GM12878 (cell line): ENCODE measurements at regions of chr1 and their contacts with region 1.

Region 1: GRCh38 chr1:169601093-169601881 is 15.0 kb upstream of the F5 start:
- DNase-seq: peak; percentile 52
- ATAC-seq: peak; percentile 81
- H3K4me3 ChIP-seq: no peak overlapping the region
- H3K27ac ChIP-seq: no peak overlapping the region
- H3K4me1 ChIP-seq: peaks cover 10% of the 10 kb centered on the region
- H3K27me3 ChIP-seq: no peaks in the 10 kb centered on the region
- CTCF ChIP-seq: peak; percentile 42 to 73 (median 53); a peak in 5 of 6 replicates
- EP300 ChIP-seq: no peak
- POLR2A ChIP-seq: no peak
- RAD21 ChIP-seq: peak; percentile 87

Region 2: DNA sequence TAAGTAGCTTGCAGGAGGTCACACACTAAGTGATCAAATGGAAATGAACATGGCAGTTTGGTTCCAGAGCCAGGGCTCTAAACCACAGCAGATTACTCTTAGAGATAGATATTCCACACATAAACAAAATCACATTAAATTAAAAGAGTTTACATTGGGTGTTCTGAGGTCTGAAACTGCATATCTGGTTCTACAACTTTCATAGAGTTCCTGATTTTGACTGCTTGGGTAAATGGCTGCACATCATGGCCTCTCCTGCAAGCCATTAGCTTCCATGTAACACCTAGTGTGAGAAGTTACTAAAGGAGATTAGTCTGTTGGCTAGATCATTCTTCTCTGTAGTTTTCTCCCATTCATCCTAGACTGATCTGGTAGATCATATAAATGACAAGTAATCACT is 1044.6 kb before region 1 on chr1:
- CTCF ChIA-PET with region 1: no interaction called
- POLR2A ChIA-PET with region 1: no interaction called
- RAD21 ChIA-PET with region 1: no interaction called
- SMC1A ChIA-PET with region 1: no interaction called
- in situ Hi-C with region 1: no loop called
- intact Hi-C with region 1: no loop called
- DNase-seq: no peak
- ATAC-seq: no peak
- H3K4me3 ChIP-seq: no peak overlapping the region
- H3K27ac ChIP-seq: no peak overlapping the region
- H3K4me1 ChIP-seq: no peaks in the 10 kb centered on the region; the same call in 1 of the 2 replicates
- H3K27me3 ChIP-seq: no peaks in the 10 kb centered on the region
- CTCF ChIP-seq: no peak
- EP300 ChIP-seq: no peak
- POLR2A ChIP-seq: no peak
- RAD21 ChIP-seq: no peak

Region 3: DNA sequence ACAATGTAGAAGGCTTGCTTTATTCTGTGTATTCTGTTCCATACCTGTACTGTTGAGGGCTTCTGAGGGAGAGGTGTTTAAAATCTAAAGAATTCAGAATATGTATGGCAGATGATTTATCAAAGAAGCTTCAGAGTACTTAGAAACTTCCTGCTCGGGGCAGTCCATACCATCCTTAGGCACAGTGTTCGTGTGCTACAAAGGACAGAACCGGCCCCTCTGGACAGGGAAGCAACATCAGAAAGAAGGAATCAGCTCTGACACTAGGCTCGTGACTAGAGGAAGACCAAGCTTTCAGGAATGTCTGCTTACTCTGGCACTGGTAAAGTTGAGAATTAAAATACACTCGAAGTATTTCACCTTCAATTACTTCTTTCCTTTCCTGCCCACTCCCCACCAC is 14.5 kb after region 1 on chr1:
- CTCF ChIA-PET with region 1: interaction called, 23 read pairs
- POLR2A ChIA-PET with region 1: no interaction called
- RAD21 ChIA-PET with region 1: interaction called, 3 read pairs
- SMC1A ChIA-PET with region 1: interaction called, 13 read pairs
- in situ Hi-C with region 1: no loop called
- intact Hi-C with region 1: no loop called
- DNase-seq: no peak
- ATAC-seq: no peak
- H3K4me3 ChIP-seq: no peak overlapping the region
- H3K27ac ChIP-seq: no peak overlapping the region
- H3K4me1 ChIP-seq: no peaks in the 10 kb centered on the region
- H3K27me3 ChIP-seq: no peaks in the 10 kb centered on the region
- CTCF ChIP-seq: no peak
- EP300 ChIP-seq: no peak
- POLR2A ChIP-seq: no peak
- RAD21 ChIP-seq: no peak

Region 4: DNA sequence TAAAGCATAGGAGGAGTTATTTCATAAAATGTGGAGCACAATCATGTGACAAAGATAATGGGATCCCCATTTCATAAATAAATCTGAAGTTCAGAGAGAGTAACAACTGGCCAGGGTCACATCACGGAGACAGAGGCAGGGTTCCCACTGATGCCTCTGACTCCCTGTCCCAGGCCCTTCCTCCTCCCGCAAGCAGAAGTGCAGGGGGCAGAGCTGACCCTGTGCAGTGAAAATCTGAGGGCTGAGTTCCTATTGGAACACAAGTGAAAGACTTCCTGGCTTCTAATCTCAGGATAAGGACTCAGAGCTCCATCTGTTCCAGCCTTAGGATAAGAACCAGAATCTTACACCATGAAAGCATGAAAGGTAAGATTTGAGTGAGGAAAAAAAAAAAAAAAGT is 88.1 kb after region 1 on chr1:
- CTCF ChIA-PET with region 1: interaction called, 51 read pairs
- POLR2A ChIA-PET with region 1: interaction called, 3 read pairs
- RAD21 ChIA-PET with region 1: interaction called, 29 read pairs
- SMC1A ChIA-PET with region 1: interaction called, 102 read pairs
- in situ Hi-C with region 1: no loop called
- intact Hi-C with region 1: no loop called
- DNase-seq: no peak
- ATAC-seq: peak; percentile 4; the same call in 2 of the 3 replicates
- H3K4me3 ChIP-seq: no peak overlapping the region
- H3K27ac ChIP-seq: no peak overlapping the region
- H3K4me1 ChIP-seq: peaks cover 47% of the 10 kb centered on the region
- H3K27me3 ChIP-seq: no peaks in the 10 kb centered on the region
- CTCF ChIP-seq: no peak
- EP300 ChIP-seq: no peak
- POLR2A ChIP-seq: no peak
- RAD21 ChIP-seq: no peak

Region 5: GRCh38 chr1:169699711-169700110 is 98.4 kb after region 1 on chr1:
- CTCF ChIA-PET with region 1: interaction called, 96 read pairs
- POLR2A ChIA-PET with region 1: interaction called, 6 read pairs
- RAD21 ChIA-PET with region 1: interaction called, 63 read pairs
- SMC1A ChIA-PET with region 1: interaction called, 112 read pairs
- in situ Hi-C with region 1: no loop called
- intact Hi-C with region 1: no loop called
- DNase-seq: no peak
- ATAC-seq: no peak
- H3K4me3 ChIP-seq: no peak overlapping the region
- H3K27ac ChIP-seq: peak overlapping the region; percentile 38; the same call in 1 of the 2 replicates
- H3K4me1 ChIP-seq: peaks cover 40% of the 10 kb centered on the region
- H3K27me3 ChIP-seq: no peaks in the 10 kb centered on the region
- CTCF ChIP-seq: no peak
- EP300 ChIP-seq: no peak
- POLR2A ChIP-seq: no peak
- RAD21 ChIP-seq: no peak